ENCODE measurements at regions of chr3 and their contacts with region 1.

Region 1: GRCh38 chr3:48151058-48151806 is 37.0 kb downstream of the CDC25A start:
- DNase-seq: peak; percentile 85
- H3K4me3 Mint-ChIP-seq: no peak overlapping the region
- H3K27ac Mint-ChIP-seq: no peak overlapping the region
- H3K4me1 Mint-ChIP-seq: peaks cover 35% of the 10 kb centered on the region
- H3K27me3 Mint-ChIP-seq: no peaks in the 10 kb centered on the region
- CTCF ChIP-seq: peak; percentile 75

Region 2: GRCh38 chr3:47824541-47825473 is 326.4 kb before region 1 on chr3:
- CTCF ChIA-PET with region 1: interaction called, 20 read pairs
- intact Hi-C with region 1: no loop called
- DNase-seq: peak; percentile 88
- H3K4me3 Mint-ChIP-seq: peak overlapping the region; percentile 84
- H3K27ac Mint-ChIP-seq: peak overlapping the region; percentile 1
- H3K4me1 Mint-ChIP-seq: peaks cover 10% of the 10 kb centered on the region
- H3K27me3 Mint-ChIP-seq: no peaks in the 10 kb centered on the region
- CTCF ChIP-seq: peak; percentile 49

Region 3: GRCh38 chr3:47836986-47837385 is 314.2 kb before region 1 on chr3:
- CTCF ChIA-PET with region 1: interaction called, 17 read pairs
- intact Hi-C with region 1: loop called (anchors 1 kb)
- DNase-seq: no peak
- H3K4me3 Mint-ChIP-seq: no peak overlapping the region
- H3K27ac Mint-ChIP-seq: peak overlapping the region; percentile 31
- H3K4me1 Mint-ChIP-seq: no peaks in the 10 kb centered on the region
- H3K27me3 Mint-ChIP-seq: no peaks in the 10 kb centered on the region
- CTCF ChIP-seq: no peak

Measured in Calu3 (cell line).